Activated naive CD4-positive, alpha-beta T cell treated with anti-CD3 and anti-CD28 coated beads for 36 hours (primary cell): ENCODE measurements at regions of chr5 and their contacts with region 1.

Region 1: DNA sequence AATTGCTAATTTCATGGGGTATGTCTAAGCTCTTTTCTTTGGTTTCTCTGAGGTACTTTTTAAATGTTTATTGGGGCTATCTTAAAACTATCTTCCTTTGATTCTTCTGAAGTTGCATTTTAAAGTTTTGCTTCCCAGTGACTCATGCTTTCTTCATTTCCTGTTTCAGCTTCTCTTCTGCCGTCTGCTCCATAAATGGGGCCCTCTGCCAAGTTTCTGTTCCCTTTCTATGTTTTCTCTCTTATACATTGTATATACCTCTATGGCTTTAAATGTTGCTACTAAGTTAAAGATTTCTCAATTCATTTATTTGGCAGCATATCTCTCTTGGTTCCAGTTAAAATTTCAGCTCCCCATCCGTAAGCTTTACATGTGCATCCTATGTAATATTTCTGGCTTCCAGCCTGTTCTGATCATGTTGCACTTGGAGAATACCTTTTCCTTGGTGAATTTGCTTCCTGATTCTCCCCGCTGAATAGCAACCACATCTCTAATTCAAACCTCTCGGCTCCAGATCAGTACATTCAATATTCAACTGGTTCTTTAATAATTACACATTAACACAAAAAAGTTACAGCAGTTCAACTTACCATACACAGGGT is 125.3 kb downstream of the ST8SIA4 start:
- DNase-seq: peak; percentile 56
- H3K4me3 Mint-ChIP-seq: no peak overlapping the region
- H3K27ac Mint-ChIP-seq: peak overlapping the region; percentile 74
- H3K4me1 Mint-ChIP-seq: peaks cover 43% of the 10 kb centered on the region
- H3K27me3 Mint-ChIP-seq: no peaks in the 10 kb centered on the region

Region 2: DNA sequence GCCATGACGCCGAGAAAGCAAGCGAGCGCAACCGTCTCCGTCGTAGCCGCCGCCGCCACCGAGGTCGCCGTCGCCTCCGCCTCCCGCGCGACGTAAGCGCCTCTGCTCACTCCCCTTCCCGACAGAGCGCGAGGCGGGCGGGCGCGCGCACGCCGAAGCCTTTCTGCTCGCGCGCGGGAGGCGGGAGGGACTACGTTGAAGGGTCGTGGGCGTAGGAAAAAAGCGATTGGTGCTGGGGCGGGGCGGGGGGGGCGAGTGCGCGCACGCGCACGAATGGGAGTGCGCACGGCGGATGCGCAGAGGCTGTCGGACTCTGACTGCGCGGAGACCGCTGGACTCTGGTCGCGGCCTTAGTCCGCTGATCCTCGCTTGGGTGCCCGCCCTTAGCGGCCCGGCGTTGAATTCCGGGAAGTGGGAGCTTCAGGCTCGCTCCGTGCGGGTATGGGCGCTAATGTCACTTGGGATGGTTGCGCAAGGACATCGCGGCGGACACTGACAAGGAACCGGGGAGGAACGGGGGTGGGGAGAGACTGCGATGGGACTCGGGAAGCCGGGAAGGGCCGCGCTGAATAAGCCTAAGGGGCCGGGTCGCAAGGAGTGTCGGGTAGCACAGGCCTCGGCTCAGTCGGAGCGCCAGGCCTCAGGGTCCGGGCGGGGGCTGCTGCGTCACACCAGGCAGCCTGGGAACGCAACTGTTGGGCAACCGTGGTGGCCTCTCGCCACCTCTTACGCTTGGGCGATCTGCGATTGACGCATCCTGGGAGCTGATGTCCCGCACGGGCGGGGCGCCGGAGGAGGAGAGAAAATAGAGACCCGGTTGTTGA is 1848.7 kb before region 1 on chr5 and contains the start of gene CHD1:
- CTCF ChIA-PET with region 1: no interaction called
- intact Hi-C with region 1: loop called (anchors 5 kb)
- DNase-seq: peak; percentile 97
- H3K4me3 Mint-ChIP-seq: peak within 1 kb of the TSS; percentile 93
- H3K27ac Mint-ChIP-seq: peak within 1 kb of the TSS; percentile 100
- H3K4me1 Mint-ChIP-seq: peaks cover 57% of the 10 kb centered on the region
- H3K27me3 Mint-ChIP-seq: no peaks in the 10 kb centered on the region
- total RNA-seq, gene CHD1: 50.5 to 52.1 TPM

Region 3: DNA sequence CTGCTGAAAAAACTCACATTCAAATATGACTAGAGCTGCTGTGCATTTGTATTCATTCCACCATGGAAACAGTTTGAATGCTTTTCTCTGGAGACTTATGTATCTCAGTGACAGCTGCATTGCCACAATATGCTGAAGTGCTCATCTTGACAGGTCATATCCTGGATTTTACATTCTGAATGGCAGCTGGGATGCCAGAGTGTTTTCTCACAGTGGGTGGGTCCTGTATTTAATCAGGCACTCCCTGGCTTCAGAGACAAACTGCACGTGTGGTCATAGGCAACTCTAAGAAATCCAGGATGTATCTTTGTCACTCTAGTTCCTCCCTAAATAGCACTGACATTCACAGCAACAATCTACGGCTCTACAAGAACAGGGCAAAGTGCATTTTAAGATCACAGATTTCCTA is 49.7 kb after region 1 on chr5:
- CTCF ChIA-PET with region 1: interaction called, 4 read pairs
- intact Hi-C with region 1: loop called (anchors 1 kb)
- DNase-seq: peak; percentile 12
- H3K4me3 Mint-ChIP-seq: no peak overlapping the region
- H3K27ac Mint-ChIP-seq: no peak overlapping the region
- H3K4me1 Mint-ChIP-seq: peaks cover 33% of the 10 kb centered on the region
- H3K27me3 Mint-ChIP-seq: no peaks in the 10 kb centered on the region

Region 4: GRCh38 chr5:100852988-100853449 is 75.2 kb after region 1 on chr5:
- CTCF ChIA-PET with region 1: interaction called, 7 read pairs
- intact Hi-C with region 1: loop called (anchors 1 kb)
- DNase-seq: no peak
- H3K4me3 Mint-ChIP-seq: peak overlapping the region; percentile 51
- H3K27ac Mint-ChIP-seq: peak overlapping the region; percentile 73
- H3K4me1 Mint-ChIP-seq: peaks cover 34% of the 10 kb centered on the region
- H3K27me3 Mint-ChIP-seq: no peaks in the 10 kb centered on the region

Region 5: DNA sequence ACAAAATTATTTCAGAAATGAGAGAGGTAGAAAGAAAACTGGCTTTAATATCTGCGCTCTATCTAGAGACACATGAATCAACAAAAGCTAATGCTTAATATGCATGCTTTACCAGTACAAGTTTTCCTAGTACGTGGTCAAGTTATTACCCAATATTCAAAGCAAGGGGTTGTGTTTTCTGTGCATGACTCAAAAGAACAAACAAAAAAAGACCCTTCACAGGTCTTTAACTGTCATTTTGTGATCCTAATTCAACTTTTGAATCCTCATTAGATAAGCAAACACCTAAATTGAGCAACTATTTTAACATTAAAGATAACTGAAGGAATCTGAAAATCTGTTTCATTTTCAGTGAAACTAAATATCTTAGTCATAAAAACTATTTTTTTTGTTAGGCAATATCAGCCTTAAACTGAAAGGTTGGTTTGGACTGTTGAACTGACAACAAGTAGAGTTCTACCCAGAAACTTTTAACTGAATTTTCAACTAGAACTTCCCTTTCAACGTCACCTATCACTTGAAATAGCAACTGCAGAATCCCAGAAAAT is 112.8 kb after region 1 on chr5:
- CTCF ChIA-PET with region 1: no interaction called
- intact Hi-C with region 1: loop called (anchors 1 kb)
- DNase-seq: no peak
- H3K4me3 Mint-ChIP-seq: peak overlapping the region; percentile 52
- H3K27ac Mint-ChIP-seq: peak overlapping the region; percentile 70
- H3K4me1 Mint-ChIP-seq: peaks cover 53% of the 10 kb centered on the region
- H3K27me3 Mint-ChIP-seq: no peaks in the 10 kb centered on the region

Region 6: GRCh38 chr5:101045689-101046088 is 267.9 kb after region 1 on chr5:
- CTCF ChIA-PET with region 1: no interaction called
- intact Hi-C with region 1: loop called (anchors 1 kb)
- DNase-seq: no peak
- H3K4me3 Mint-ChIP-seq: no peak overlapping the region
- H3K27ac Mint-ChIP-seq: no peak overlapping the region
- H3K4me1 Mint-ChIP-seq: peaks cover 6% of the 10 kb centered on the region
- H3K27me3 Mint-ChIP-seq: no peaks in the 10 kb centered on the region